ENCODE measurements at regions of chr20 and their contacts with region 1.

Region 1: GRCh38 chr20:3927486-3928291 is 38.5 kb downstream of the PANK2 start:
- DNase-seq: peak in 1 of 2 experiments; percentile 61
- H3K4me3 ChIP-seq: no peak overlapping the region
- H3K27ac ChIP-seq: no peak overlapping the region
- H3K4me1 ChIP-seq: peaks cover 0 to 19% (median 2%) of the 10 kb centered on the region in 4 experiments; a peak in 3 of 7 replicates
- H3K27me3 ChIP-seq: no peaks in the 10 kb centered on the region
- CTCF ChIP-seq: no peak
- EP300 ChIP-seq: no peak
- POLR2A ChIP-seq: peak; percentile 9 to 67; a peak in 2 of 3 replicates
- RAD21 ChIP-seq: no peak

Region 2: GRCh38 chr20:3916364-3916763 is 11.3 kb before region 1 on chr20:
- CTCF ChIA-PET with region 1: interaction called, 4 read pairs
- POLR2A ChIA-PET with region 1: interaction called, 16 read pairs
- DNase-seq: no peak
- H3K4me3 ChIP-seq: no peak overlapping the region
- H3K27ac ChIP-seq: no peak overlapping the region
- H3K4me1 ChIP-seq: no peaks in the 10 kb centered on the region
- H3K27me3 ChIP-seq: no peaks in the 10 kb centered on the region
- CTCF ChIP-seq: no peak
- EP300 ChIP-seq: no peak
- POLR2A ChIP-seq: no peak
- RAD21 ChIP-seq: no peak

Measured in H1 (cell line).